Endothelial cell of umbilical vein (primary cell): ENCODE measurements at regions of chr3 and their contacts with region 1.

Region 1: DNA sequence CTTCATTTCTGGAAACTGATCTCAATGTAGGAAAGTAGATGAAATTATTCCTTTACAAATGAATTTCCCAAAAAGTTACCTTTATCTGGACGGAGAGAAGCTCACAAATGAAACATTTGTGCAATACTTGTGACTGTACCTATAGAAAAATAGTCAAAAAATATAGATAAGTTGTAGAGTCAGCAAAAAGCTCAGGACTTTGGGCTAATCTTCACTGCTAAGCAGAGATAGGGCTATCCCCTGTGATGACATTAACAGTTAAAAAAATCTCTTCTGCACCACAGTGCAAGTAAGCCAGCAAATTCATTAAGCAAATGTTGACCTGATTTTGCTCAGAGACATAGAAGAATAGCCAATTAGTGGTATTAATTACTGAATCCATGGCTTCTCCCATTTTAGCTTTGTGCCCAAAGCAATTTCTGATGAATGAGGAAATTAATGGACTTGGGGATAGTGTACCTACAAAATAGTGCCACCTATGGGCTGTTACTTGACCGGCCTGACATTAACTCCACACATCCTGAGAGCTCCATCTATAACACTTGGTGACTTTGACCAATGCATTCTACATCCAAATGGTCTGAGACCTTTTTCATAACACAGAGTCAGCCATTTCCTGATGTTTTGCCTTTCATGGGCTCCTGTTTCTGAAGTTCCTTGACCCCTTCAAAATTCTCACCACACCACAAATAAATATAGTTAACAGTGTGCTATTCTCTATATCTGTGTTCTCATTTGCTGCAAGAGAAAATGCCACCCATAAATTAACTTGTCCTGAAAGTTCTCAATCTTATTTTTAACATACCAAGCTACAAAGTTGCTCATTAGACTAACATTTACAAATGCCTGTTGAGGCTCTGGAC is 105.0 kb downstream of the SSR3 start:
- DNase-seq: peak; percentile 67
- H3K4me3 ChIP-seq: no peak overlapping the region
- H3K27ac ChIP-seq: no peak overlapping the region
- H3K4me1 ChIP-seq: peaks cover 5% of the 10 kb centered on the region
- H3K27me3 ChIP-seq: no peaks in the 10 kb centered on the region
- CTCF ChIP-seq: peak; percentile 58 to 59
- POLR2A ChIP-seq: no peak

Region 2: GRCh38 chr3:156044634-156044975 is 405.3 kb before region 1 on chr3:
- CTCF ChIA-PET with region 1: interaction called, 5 read pairs
- POLR2A ChIA-PET with region 1: no interaction called
- dilution Hi-C with region 1: no loop called
- intact Hi-C with region 1: loop called (anchors 1 kb)
- DNase-seq: no peak
- H3K4me3 ChIP-seq: no peak overlapping the region
- H3K27ac ChIP-seq: no peak overlapping the region
- H3K4me1 ChIP-seq: no peaks in the 10 kb centered on the region
- H3K27me3 ChIP-seq: no peaks in the 10 kb centered on the region
- CTCF ChIP-seq: no peak
- POLR2A ChIP-seq: no peak

Region 3: DNA sequence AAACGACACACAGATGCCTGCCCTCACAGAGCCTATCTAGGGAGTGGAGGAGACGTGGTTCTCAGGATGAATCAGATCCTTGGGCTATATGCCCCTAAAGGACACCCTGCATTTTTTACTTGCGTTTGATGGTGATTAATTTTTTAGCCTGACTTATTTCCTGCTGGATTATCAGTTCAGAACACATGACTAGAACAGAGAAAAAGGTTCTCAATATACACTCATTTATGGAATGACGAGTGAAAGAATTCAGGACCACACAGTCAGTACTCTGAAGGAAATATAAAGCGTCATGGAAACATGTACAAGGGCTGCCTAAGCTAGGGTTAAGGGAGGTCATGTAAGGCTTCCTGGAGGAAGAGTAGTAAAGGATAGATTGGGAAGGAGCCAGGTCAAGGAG is 16.8 kb before region 1 on chr3:
- CTCF ChIA-PET with region 1: interaction called, 16 read pairs
- POLR2A ChIA-PET with region 1: interaction called, 3 read pairs
- dilution Hi-C with region 1: no loop called
- intact Hi-C with region 1: no loop called
- DNase-seq: peak; percentile 92
- H3K4me3 ChIP-seq: no peak overlapping the region
- H3K27ac ChIP-seq: peak overlapping the region; percentile 48
- H3K4me1 ChIP-seq: peaks cover 25% of the 10 kb centered on the region
- H3K27me3 ChIP-seq: no peaks in the 10 kb centered on the region
- CTCF ChIP-seq: no peak
- POLR2A ChIP-seq: no peak

Region 4: DNA sequence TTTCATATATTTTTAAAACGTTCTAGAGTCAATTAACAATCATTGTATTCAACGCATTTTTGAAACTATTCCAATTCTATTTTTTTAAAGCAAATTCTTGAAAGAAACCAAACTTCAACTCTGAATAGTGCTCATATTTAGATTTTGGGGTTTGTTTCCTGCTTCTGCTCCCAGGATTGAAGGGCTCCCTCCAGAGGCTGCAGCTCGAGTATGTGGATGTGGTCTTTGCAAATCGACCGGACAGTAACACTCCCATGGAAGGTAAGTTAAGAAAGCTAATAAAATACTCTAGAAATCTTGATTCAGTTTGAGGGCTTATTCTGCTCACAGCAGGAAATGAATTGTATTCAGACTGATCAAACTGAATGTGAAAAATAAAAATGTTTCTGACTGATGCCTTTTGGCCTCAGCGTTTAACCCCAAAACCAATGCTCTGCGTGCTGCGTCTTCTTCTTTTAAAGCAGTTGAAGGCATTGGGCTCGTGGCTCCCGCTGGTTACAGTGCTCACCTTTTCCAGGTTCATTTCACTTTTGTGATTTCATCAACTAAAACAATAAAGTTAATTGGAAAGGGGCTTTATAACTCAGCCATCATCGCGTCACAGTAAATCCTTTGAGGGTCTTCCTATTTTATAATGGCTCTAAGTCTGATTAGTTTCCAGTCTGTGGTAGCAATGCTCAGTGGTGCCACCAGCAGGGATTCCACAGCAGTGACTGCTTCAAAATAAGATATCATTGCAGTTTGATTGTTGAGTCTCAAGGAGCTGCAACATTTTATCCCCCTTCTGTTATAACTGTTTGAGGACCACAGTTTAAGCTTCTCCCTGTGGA is 24.8 kb after region 1 on chr3:
- CTCF ChIA-PET with region 1: interaction called, 45 read pairs
- POLR2A ChIA-PET with region 1: interaction called, 9 read pairs
- dilution Hi-C with region 1: no loop called
- intact Hi-C with region 1: no loop called
- DNase-seq: no peak
- H3K4me3 ChIP-seq: no peak overlapping the region
- H3K27ac ChIP-seq: no peak overlapping the region
- H3K4me1 ChIP-seq: no peaks in the 10 kb centered on the region
- H3K27me3 ChIP-seq: no peaks in the 10 kb centered on the region
- CTCF ChIP-seq: peak; percentile 29 to 43
- POLR2A ChIP-seq: no peak

Region 5: GRCh38 chr3:156489462-156489911 is 39.5 kb after region 1 on chr3:
- CTCF ChIA-PET with region 1: interaction called, 11 read pairs
- POLR2A ChIA-PET with region 1: no interaction called
- dilution Hi-C with region 1: no loop called
- intact Hi-C with region 1: loop called (anchors 2 kb)
- DNase-seq: peak; percentile 85
- H3K4me3 ChIP-seq: no peak overlapping the region
- H3K27ac ChIP-seq: peak overlapping the region; percentile 74
- H3K4me1 ChIP-seq: peaks cover 31% of the 10 kb centered on the region
- H3K27me3 ChIP-seq: no peaks in the 10 kb centered on the region
- CTCF ChIP-seq: no peak
- POLR2A ChIP-seq: no peak

Region 6: DNA sequence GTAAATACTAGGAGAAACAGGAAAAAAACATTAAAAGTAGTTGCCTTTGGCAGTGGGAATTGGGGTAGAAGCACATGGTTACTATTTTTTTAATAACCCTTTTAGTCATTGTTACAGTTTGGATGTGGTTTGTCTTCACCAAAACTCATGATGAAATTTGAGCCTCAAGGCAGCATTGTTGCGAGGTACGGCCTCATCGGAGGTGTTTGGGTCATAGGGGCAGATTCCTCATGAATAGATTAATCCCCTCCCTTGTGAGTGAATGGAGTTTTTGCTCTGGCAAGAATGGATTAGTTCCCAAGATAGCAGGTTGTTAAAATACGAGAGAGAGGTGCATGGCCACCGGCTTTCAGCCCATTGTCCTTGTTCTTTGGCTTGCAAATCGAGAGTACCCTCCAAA is 468.8 kb after region 1 on chr3:
- CTCF ChIA-PET with region 1: no interaction called
- POLR2A ChIA-PET with region 1: no interaction called
- dilution Hi-C with region 1: no loop called
- intact Hi-C with region 1: no loop called
- DNase-seq: no peak
- H3K4me3 ChIP-seq: no peak overlapping the region
- H3K27ac ChIP-seq: no peak overlapping the region
- H3K4me1 ChIP-seq: no peaks in the 10 kb centered on the region
- H3K27me3 ChIP-seq: no peaks in the 10 kb centered on the region
- CTCF ChIP-seq: no peak
- POLR2A ChIP-seq: no peak